ENCODE measurements at regions of chr6 and their contacts with region 1.

Region 1: DNA sequence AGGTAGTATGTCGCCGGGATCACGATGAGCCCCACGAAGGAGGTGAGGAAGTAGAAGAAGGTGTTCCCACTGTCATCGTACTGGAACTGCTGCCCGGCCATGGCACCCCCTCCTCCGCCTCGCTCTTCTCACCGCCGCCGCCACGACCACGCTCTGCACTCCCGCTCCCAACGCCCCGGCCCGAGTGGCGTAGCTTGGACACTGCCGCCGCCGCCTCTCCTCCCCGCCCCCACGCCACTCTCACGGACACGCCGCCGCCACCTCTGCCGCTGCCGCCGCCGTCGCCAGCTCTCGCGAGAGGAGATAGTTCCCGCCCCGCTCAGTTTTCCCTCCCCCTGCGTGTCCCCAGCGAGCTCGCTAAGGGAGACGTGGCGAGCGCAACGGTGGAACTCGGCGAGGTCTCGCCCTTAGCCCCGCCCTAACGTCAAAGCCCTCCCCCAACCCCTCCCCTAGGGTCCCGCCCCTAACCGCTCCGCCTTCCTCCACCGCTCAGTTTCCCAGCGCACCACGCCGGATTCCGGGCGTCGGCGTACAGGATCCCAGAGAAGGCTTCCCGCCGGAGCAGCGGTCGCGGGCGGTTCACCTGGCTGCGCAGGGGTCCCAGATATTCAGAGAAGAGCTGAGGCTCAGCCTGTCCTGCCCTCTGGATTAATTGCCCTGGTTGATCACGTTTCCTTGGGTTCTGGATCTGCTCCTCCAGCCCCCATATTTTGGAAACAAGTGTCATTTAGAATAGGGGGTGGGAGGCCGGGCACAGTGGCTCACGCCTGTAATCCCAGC is at the start of gene SEC63:
- DNase-seq: peak; percentile 97
- H3K4me3 Mint-ChIP-seq: peak within 1 kb of the TSS; percentile 100
- H3K27ac Mint-ChIP-seq: peak within 1 kb of the TSS; percentile 99
- H3K4me1 Mint-ChIP-seq: peaks cover 14% of the 10 kb centered on the region
- H3K27me3 Mint-ChIP-seq: peaks cover 5% of the 10 kb centered on the region
- total RNA-seq, gene SEC63: 87.1 and 90.7 TPM in 2 replicates

Region 2: DNA sequence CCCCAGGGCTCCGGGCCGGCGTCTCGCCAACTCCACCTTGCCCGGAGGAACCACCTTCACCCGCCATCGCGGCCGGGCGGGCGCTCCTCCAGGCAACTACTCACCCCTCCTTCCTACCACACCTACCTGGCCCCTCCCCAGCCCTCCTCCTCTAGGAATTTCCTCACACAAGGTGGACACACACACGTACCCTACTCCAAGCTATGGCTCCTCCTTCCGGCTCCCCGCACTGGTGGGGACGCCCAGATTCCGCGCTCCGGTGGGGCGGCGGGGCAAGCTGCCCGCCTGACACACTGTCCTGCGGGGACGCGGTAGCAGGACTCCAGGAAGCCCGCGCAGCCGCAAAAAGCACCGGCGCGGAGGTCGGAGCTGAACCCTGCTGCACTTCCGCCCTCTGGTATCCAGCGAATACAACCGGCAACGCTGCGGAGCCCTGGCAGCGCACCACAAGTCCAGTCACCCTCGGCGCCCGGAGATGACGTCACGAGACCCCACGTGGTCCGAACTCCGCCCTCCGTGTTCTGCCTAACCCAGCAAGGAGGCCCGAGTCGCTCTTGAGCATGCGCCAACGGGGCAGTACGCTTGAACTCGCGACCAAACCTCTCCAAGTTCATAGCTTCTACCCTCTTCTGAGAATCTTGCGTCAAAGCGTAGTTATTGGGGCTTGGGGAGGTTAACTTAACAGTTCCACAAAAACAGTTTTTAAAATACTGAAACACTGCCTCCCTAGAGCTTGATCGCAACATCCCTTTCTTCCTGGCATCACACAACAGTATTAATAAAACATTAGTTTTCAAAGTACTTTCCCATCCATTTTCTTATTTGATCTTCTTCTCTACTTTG is 1632.5 kb before region 1 on chr6 and contains the start of gene ATG5:
- intact Hi-C with region 1: loop called (anchors 2 kb)
- DNase-seq: peak; percentile 100
- H3K4me3 Mint-ChIP-seq: peak within 1 kb of the TSS; percentile 100
- H3K27ac Mint-ChIP-seq: peak within 1 kb of the TSS; percentile 98
- H3K4me1 Mint-ChIP-seq: peaks cover 35% of the 10 kb centered on the region
- H3K27me3 Mint-ChIP-seq: peaks cover 22% of the 10 kb centered on the region
- total RNA-seq, gene ATG5: 36.0 and 36.7 TPM in 2 replicates

Region 3: GRCh38 chr6:107459283-107460082 is 498.6 kb before region 1 on chr6 and contains the start of gene PDSS2:
- intact Hi-C with region 1: loop called (anchors 1 kb)
- DNase-seq: peak; percentile 95
- H3K4me3 Mint-ChIP-seq: peak within 1 kb of the TSS; percentile 93
- H3K27ac Mint-ChIP-seq: peak within 1 kb of the TSS; percentile 91
- H3K4me1 Mint-ChIP-seq: peaks cover 16% of the 10 kb centered on the region
- H3K27me3 Mint-ChIP-seq: no peaks in the 10 kb centered on the region
- total RNA-seq, gene PDSS2: 11.8 and 14.5 TPM in 2 replicates

Region 4: GRCh38 chr6:107866606-107867301 is 91.3 kb before region 1 on chr6:
- intact Hi-C with region 1: loop called (anchors 5 kb)
- DNase-seq: no peak
- H3K4me3 Mint-ChIP-seq: no peak overlapping the region
- H3K27ac Mint-ChIP-seq: no peak overlapping the region
- H3K4me1 Mint-ChIP-seq: peaks cover 24% of the 10 kb centered on the region
- H3K27me3 Mint-ChIP-seq: peaks cover 4% of the 10 kb centered on the region

Region 5: DNA sequence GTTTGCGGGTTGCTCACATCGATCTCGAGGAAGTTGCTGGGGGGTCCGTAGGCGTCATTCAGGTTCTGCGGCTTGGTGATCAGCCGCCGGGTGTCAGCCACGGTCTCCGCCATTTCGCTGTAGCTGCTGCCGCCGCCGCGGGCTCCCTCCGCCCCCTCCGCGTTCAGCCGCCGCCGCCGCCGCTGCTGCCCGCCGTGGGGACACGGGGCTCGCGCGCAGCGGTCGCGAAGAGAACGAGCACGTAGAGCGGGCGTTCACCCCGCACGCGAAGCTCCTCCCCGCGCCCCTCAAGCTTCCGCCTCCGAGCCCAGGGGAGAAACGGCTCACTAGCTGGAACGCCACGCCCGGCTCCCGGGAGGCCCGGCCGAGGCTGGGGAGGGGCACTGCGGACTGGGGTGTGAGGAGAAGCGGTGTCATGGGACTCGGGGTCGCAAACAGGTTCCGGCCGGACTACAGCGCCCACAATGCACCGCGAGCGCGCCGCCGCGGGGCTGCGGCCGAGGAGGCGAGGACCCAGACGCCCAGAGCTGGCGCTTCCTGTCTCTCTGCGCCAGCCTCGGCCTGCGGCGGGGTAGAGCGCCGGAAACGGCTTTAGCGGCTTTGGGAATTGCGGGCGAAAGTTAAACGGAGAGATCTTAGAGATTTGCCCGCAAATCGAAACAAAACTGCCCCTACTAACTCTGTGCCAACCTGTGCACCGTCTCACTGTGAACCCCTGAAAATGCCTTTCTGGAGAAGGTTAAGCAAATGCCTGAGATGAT is 302.9 kb after region 1 on chr6 and contains the start of gene SNX3:
- intact Hi-C with region 1: loop called (anchors 1 kb)
- DNase-seq: peak; percentile 88
- H3K4me3 Mint-ChIP-seq: peak within 1 kb of the TSS; percentile 90
- H3K27ac Mint-ChIP-seq: peak within 1 kb of the TSS; percentile 93
- H3K4me1 Mint-ChIP-seq: peaks cover 12% of the 10 kb centered on the region
- H3K27me3 Mint-ChIP-seq: peaks cover 6% of the 10 kb centered on the region
- total RNA-seq, gene SNX3: 68.5 and 72.5 TPM in 2 replicates

Region 6: GRCh38 chr6:109482905-109483735 is 1525.0 kb after region 1 on chr6 and contains the start of gene ZBTB24:
- intact Hi-C with region 1: loop called (anchors 5 kb)
- DNase-seq: peak; percentile 87
- H3K4me3 Mint-ChIP-seq: peak within 1 kb of the TSS; percentile 98
- H3K27ac Mint-ChIP-seq: peak within 1 kb of the TSS; percentile 92
- H3K4me1 Mint-ChIP-seq: peaks cover 47% of the 10 kb centered on the region
- H3K27me3 Mint-ChIP-seq: peaks cover 1% of the 10 kb centered on the region
- total RNA-seq, gene ZBTB24: 19.5 and 20.8 TPM in 2 replicates

Measured in activated T-helper 1 cell treated with anti-CD3 and anti-CD28 coated beads, Interleukin-12 subunit alpha, Interleukin-12 subunit beta, Interleukin-2, Interleukin-4 antibody, amounts not matched to agents 30 ng/mL and 10 ng/mL and 1 ng/mL, durations not matched to agents 14 hours and 24 hours and 36 hours (primary cell).